ENCODE measurements at regions of chr1 and their contacts with region 1.

Region 1: DNA sequence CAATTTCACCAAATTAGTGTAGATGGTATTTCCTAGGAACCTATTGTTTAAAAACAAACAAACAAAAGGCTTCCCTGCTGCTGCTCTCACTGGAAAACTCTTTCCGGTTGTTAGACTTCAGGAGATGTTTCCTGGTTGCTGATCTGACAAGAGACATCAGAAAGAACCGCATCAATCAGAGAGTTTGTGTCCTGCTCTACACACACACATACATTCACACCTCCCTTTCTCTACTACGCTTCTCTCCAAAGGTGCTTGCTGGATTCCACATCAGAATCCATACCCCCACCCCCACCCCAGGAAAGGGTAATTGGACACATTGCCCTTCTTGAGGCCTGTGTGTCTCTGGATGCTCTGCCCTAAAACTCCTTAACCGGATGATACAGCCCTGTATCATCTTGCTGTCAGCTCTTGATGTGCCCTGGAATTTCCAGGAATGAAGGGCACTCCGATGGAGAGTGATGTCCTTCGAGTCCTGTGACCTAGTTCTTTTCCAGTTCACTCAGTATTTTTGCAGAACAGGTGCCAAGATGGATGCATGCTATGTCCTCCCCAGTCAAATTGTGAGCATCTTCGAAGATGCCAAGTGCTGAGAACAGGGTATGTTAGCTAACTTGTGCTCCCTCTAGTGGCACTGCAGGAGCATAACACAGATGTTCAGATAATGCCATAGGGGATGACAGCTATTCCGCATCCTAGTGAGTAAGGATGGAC is 113.7 kb upstream of the SLC35F3 start:
- DNase-seq: peak; percentile 67
- H3K4me3 ChIP-seq: no peak overlapping the region
- H3K27ac ChIP-seq: no peak overlapping the region
- H3K4me1 ChIP-seq: no peaks in the 10 kb centered on the region
- H3K27me3 ChIP-seq: no peaks in the 10 kb centered on the region
- CTCF ChIP-seq: peak; percentile 92

Region 2: DNA sequence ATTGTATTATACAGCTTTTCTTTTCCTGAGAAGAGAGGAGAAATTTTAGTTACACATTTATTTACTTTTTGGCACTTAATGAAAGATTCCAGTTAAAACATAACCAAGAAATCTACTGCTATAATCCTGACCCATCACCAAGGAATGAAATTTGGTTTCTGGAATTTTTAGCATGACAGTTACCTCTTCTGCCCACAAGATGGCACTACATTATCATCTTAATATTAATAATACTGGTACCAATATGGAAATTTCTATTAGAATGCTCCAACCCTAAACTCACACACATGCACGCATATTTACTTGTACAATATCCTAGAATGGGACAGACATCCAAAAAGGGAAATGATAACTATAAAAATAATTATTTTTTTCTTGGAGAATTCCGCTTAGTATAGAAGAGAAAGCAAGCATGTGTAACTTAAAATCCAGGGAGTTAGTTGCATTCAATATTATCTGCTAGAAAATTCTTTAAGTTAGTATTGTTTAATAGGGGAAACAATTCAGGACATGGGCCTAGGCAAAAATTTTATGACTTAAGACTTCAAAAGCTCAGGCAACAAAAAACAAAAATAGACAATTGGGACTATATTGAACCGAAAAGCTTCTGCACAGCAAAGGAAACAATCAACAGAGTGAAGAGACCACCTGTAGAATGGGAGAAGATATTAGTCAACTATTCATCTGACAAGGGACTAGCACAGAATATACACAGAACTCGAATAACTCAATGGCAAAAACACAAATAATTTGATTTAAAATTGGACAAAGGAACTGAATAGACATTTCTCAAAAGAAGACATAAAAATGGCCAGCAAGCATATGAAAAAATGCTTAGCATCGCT is 425.9 kb before region 1 on chr1:
- CTCF ChIA-PET with region 1: no interaction called
- POLR2A ChIA-PET with region 1: no interaction called
- intact Hi-C with region 1: loop called (anchors 10 kb)
- DNase-seq: peak; percentile 33
- H3K4me3 ChIP-seq: no peak overlapping the region
- H3K27ac ChIP-seq: no peak overlapping the region
- H3K4me1 ChIP-seq: no peaks in the 10 kb centered on the region
- H3K27me3 ChIP-seq: no peaks in the 10 kb centered on the region
- CTCF ChIP-seq: peak; percentile 77

Region 3: DNA sequence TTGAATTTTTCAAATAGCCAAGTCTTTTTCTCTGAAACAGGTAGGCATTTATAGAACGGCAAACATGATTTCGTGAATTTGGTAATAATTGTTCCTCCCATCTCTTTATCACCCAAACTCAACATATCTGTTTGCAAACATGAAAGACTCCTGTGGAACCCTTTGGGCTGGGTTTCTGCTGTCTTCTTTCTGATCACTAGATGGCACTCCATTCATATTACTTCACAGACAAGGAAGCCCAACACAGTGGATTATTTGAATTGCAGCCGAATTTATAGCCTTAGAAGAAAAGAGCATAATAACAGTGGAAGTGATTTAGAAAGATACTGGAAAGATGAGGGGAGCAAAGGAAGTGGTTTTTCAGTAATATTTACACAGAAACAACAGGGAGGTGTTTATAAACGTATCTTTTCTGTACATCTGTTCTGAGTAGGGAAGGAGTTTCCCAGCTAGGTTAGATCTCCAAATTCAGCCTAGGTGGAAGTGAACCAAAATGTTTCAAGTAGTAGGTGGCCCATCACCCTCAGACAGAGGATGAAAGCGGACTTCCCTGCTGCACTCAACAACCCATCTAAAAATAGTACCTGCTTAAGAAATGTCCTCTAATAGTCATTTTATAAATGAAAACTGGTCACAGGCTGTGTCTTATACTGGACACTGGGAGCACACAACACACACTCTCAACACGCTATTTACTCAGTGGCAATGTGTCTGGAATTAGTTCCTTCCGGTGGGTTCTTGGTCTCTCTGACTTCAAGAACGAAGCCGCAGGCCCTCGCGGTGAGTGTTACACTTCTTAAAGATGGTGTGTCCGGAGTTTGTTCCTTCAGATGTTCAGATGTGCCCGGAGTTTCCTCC is 395.7 kb before region 1 on chr1:
- CTCF ChIA-PET with region 1: interaction called, 11 read pairs
- POLR2A ChIA-PET with region 1: no interaction called
- intact Hi-C with region 1: loop called (anchors 10 kb)
- DNase-seq: peak; percentile 74
- H3K4me3 ChIP-seq: no peak overlapping the region
- H3K27ac ChIP-seq: no peak overlapping the region
- H3K4me1 ChIP-seq: no peaks in the 10 kb centered on the region
- H3K27me3 ChIP-seq: no peaks in the 10 kb centered on the region
- CTCF ChIP-seq: peak; percentile 89

Region 4: GRCh38 chr1:233440951-233441401 is 349.8 kb before region 1 on chr1:
- CTCF ChIA-PET with region 1: interaction called, 19 read pairs
- POLR2A ChIA-PET with region 1: no interaction called
- intact Hi-C with region 1: loop called (anchors 2 kb)
- DNase-seq: peak; percentile 83
- H3K4me3 ChIP-seq: no peak overlapping the region
- H3K27ac ChIP-seq: no peak overlapping the region
- H3K4me1 ChIP-seq: no peaks in the 10 kb centered on the region
- H3K27me3 ChIP-seq: no peaks in the 10 kb centered on the region
- CTCF ChIP-seq: peak; percentile 74

Region 5: GRCh38 chr1:233518349-233518748 is 272.5 kb before region 1 on chr1:
- CTCF ChIA-PET with region 1: no interaction called
- POLR2A ChIA-PET with region 1: no interaction called
- intact Hi-C with region 1: loop called (anchors 5 kb)
- DNase-seq: peak; percentile 66
- H3K4me3 ChIP-seq: no peak overlapping the region
- H3K27ac ChIP-seq: no peak overlapping the region
- H3K4me1 ChIP-seq: no peaks in the 10 kb centered on the region
- H3K27me3 ChIP-seq: peaks cover 5% of the 10 kb centered on the region
- CTCF ChIP-seq: peak; percentile 79

Region 6: GRCh38 chr1:234149217-234149616 is 358.4 kb after region 1 on chr1:
- CTCF ChIA-PET with region 1: no interaction called
- POLR2A ChIA-PET with region 1: no interaction called
- intact Hi-C with region 1: no loop called
- DNase-seq: no peak
- H3K4me3 ChIP-seq: no peak overlapping the region
- H3K27ac ChIP-seq: no peak overlapping the region
- H3K4me1 ChIP-seq: no peaks in the 10 kb centered on the region
- H3K27me3 ChIP-seq: no peaks in the 10 kb centered on the region
- CTCF ChIP-seq: no peak